Left cardiac atrium (tissue), 4 donors: ENCODE measurements at regions of chr7 and their contacts with region 1.

Region 1: DNA sequence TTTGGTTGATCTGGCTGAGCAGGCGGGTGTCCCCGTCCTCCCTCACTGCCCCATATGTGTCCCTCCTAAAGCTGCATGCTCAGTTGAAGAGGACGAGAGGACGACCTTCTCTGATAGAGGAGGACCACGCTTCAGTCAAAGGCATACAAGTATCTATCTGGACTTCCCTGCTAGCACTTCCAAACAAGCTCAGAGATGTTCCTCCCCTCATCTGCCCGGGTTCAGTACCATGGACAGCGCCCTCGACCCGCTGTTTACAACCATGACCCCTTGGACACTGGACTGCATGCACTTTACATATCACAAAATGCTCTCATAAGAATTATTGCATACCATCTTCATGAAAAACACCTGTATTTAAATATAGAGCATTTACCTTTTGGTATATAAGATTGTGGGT is 26.9 kb upstream of the TRIM56 start:
- DNase-seq: peak; percentile 67
- ATAC-seq: peak; percentile 68 to 81

Region 2: DNA sequence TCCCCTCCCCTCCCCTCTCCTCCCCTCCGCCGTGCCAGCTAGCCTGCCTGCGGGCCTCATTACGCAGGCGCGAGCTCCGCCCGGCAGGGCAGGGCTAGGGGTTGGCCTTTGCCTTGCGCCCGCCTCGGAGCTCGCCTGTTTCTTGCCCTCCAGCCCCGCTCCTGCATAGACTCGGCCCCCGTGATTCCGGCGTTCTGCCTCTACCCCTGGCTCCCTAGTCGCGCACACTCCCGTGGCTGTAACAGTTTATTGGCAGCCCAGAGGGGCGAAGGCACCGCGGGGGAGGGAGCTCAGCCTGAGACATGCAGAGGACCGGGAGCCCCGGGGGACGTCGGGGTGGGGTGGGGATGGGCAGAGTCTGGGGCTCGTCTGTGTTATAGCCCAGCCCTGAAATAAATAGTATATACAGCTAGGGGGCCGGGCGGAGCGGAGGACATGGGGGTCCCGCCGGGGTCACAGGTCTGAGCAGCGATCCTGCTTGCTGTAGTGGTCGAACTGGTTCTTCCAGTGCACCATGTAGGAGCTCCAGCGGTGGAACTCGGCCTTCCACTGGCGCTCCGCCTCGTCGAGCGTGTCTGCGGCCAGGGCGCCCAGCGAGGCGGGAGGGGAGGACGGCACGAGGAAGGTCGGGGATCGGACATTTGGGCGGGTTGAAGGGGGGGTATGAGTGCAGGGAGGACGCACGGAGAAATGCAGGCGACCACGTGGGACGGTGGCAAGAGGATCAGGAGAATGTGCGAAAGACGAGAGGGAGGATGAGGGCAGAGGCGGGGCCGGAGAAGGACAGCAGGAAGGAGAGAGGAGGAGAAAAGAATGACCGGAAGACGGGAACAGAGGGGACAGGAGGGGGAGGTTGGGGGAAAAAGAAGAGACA is 168.4 kb before region 1 on chr7:
- intact Hi-C with region 1: loop called in 1 of 2 experiments (anchors 5 kb)
- DNase-seq: peak; percentile 95
- ATAC-seq: peak; percentile 91

Region 3: GRCh38 chr7:100896732-100897608 is 161.4 kb before region 1 on chr7:
- intact Hi-C with region 1: loop called (anchors 2 to 5 kb)
- DNase-seq: peak; percentile 75
- ATAC-seq: peak; percentile 10 to 17

Region 4: DNA sequence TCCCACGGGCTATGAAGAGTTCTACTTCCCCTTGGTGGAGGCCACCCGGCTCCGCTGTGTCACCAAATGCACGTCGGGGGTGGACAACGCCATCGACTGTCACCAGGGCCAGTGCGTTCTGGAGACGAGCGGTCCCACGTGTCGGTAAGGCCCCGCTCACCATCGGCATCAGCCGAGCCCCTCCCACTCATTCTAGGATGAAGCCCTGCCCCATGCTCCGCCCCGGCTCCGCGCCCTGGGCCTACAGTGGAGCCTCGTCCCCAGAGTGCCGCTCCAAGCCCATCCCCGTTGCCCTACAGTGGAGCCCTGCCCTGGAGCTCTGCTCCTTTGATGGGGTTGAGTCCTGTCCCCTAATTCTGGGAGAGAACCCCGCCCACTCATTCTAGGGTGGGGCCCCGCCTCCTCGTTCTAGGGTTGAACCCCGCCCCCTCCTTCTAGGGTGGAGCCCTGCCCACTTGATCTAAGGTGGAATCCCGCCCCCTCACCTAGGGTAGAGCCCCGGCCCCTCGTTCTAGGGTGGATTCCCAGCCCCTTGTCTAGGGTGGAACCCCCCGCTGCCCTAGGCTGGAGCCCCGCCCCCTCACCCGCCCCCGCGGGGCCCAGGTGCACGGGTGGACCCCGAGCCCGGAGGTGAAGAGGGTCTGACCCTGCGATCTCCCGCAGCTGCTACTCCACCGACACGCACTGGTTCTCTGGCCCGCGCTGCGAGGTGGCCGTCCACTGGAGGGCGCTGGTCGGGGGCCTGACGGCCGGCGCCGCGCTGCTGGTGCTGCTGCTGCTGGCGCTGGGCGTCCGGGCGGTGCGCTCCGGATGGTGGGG is 92.4 kb before region 1 on chr7:
- intact Hi-C with region 1: loop called in 1 of 2 experiments (anchors 10 kb)
- DNase-seq: peak; percentile 74
- ATAC-seq: peak; percentile 36 to 82

Region 5: GRCh38 chr7:101153969-101154692 is 95.8 kb after region 1 on chr7 and contains the start of gene AP1S1:
- intact Hi-C with region 1: no loop called
- DNase-seq: peak; percentile 94
- ATAC-seq: peak; percentile 98 to 99
- total RNA-seq, gene AP1S1: 14.9 to 18.9 TPM